Right ventricle myocardium inferior (tissue), 1 donor: ENCODE measurements at regions of chr17 and their contacts with region 1.

Region 1: GRCh38 chr17:15260376-15261257 is 4.5 kb downstream of the PMP22 start:
- DNase-seq: peak; percentile 92
- ATAC-seq: peak; percentile 65

Region 2: GRCh38 chr17:15341385-15341849 is 80.8 kb after region 1 on chr17 and contains the start of gene TEKT3:
- intact Hi-C with region 1: loop called (anchors 5 kb)
- DNase-seq: peak; percentile 94
- ATAC-seq: peak; percentile 100
- total RNA-seq, gene TEKT3: 0.51 TPM

Region 3: DNA sequence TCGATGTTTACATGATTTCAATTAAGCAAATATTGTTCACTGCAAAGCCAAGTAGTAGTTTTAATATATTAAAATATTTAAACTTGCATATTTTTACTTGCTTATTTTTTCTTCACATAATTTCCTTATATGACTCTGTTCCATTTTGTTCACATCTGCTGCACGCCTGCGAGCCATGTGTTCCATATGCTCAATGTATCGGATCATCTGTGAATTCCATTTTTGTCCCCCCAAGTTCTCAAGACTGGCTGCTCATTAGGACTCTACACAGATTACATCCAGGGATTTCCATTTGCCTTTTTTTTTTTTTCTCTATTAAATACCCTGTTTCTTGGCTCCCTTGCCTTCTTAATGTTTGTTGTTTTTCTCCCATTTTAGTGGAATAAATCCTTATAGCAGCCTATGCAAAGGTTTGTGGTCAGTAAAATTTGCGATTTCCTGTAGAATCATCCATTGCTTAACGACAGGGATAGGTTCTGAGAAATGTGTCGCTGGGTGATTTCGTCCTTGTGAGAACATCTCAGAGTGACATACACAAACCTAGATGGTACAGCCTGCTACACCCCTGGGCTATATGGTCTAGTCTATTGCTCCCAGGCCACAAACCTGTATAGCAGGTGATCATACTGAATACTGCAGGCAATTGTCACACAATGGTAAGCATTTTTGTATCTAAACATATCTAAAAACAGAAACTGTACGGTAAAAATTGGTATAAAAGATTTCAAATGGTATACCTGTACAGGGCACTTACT is 110.9 kb after region 1 on chr17:
- intact Hi-C with region 1: no loop called
- DNase-seq: no peak
- ATAC-seq: no peak

Region 4: GRCh38 chr17:15414532-15415306 is 154.1 kb after region 1 on chr17:
- intact Hi-C with region 1: loop called (anchors 2 kb)
- DNase-seq: peak; percentile 80
- ATAC-seq: peak; percentile 90

Region 5: DNA sequence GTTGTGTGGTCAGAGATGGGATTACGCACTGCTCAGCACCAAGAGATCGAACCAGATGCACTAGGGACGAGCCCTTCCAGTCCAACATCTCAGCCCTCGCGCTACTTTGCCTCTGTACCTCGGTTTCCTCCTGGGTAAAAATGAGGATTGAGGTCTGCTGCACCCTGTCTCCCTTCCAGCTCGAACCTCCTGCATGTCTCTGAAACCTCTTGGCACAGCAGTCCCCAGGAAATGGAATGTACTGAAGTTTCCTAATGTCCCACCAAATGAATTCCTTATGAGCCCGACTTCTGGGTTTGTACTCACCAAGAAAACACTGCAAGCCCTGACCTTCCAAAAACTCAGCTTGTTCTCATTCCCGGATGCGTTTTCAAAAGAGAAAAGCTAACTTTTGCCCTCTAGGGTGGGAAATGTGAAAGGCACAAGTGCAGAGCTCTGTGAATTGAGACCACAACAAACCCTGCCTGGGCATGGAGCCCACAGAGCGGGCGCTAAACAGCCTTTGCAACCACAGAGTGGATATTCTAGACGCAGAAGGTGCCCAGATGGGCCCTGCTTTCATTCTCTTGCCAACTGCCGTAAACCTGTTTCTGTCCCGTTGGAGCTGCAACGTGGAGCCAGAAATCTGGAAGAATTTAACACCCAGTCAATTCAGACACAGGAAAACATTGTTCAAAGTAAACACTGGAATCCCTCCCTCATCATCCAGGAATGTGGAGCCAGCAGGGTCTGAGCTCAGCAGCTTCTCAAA is 196.5 kb after region 1 on chr17:
- intact Hi-C with region 1: loop called (anchors 5 kb)
- DNase-seq: no peak
- ATAC-seq: peak; percentile 71